MCF 10A (cell line): ENCODE measurements at regions of chr12 and their contacts with region 1.

Region 1: DNA sequence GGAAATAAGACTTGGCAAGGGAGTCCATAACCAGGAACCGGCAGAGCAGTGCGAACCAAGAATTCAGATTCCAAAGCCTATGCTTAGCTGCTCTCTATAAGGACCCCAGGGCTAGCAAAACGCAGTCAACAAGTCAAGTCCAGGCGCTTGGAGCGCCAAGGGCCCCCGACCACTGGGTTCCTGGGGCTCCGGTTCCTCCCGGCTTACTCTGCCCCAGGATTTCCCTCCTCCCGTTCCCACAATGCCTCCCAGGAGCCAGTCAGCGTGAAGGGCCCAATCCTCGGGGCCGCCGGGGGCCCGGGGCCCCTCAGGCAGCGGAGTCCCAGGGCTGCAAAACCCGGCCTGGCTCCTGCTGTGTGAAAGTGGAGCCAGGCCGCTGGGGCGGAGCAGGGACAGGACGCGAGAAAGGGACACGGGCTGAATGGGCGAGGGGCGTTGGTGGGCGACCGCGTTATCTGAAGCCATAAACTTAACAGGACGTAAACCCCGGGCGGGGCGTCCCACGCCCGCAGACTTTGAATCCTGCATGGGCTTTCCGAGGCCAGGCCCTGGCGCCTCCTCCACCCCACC is 1.5 kb downstream of the KRT8 start:
- DNase-seq: peak; percentile 87
- H3K4me3 Mint-ChIP-seq: peak overlapping the region; percentile 76
- H3K27ac Mint-ChIP-seq: peak overlapping the region; percentile 82
- H3K4me1 Mint-ChIP-seq: peaks cover 28% of the 10 kb centered on the region
- H3K27me3 Mint-ChIP-seq: no peaks in the 10 kb centered on the region
- CTCF ChIP-seq: no peak

Region 2: DNA sequence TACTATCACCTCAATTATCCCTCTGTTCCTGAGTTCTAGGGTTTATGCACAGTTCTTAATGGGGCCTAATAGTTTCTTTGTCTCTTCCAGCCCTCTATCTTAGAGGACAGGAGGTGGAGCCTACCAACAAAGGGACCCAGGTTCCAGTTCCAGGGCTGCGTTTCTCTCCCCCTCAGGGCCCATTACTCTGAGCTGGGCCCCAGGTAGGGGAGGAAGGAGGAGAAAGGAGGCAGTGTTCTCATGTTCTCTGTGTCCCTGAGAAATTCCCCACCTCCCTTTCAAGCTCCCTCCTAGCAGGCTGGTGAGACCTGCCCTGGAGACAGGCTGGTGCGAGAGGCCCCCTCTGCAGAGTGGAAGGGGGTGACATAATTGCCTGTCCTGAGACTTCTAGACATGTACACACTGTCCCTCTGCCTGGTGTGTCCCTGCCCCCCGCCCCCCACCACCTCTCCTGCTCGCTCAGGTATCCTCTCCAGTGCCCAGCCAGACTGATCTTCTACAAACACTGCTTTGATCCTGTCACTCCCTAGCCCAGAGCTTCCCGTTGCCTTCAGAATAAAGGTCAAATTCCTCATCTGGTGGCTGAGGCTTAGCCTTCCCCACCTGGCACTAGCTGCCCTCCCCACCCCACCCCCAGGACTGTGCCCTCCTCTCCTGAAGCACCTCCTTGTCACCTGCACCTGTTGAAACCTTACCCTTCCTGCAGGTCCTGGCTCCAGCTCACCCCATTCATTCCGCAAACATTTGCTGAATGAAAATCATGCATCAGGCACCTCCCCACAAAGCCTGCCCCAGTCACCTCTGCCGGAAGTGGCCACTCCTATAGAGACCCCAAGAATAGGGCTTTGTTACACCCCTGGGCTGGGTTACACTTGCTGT is 22.6 kb after region 1 on chr12:
- CTCF ChIA-PET with region 1: interaction called, 3 read pairs
- POLR2A ChIA-PET with region 1: interaction called, 8 read pairs
- intact Hi-C with region 1: loop called (anchors 2 kb)
- DNase-seq: no peak
- H3K4me3 Mint-ChIP-seq: no peak overlapping the region
- H3K27ac Mint-ChIP-seq: peak overlapping the region; percentile 94
- H3K4me1 Mint-ChIP-seq: peaks cover 26% of the 10 kb centered on the region
- H3K27me3 Mint-ChIP-seq: no peaks in the 10 kb centered on the region
- CTCF ChIP-seq: no peak

Region 3: DNA sequence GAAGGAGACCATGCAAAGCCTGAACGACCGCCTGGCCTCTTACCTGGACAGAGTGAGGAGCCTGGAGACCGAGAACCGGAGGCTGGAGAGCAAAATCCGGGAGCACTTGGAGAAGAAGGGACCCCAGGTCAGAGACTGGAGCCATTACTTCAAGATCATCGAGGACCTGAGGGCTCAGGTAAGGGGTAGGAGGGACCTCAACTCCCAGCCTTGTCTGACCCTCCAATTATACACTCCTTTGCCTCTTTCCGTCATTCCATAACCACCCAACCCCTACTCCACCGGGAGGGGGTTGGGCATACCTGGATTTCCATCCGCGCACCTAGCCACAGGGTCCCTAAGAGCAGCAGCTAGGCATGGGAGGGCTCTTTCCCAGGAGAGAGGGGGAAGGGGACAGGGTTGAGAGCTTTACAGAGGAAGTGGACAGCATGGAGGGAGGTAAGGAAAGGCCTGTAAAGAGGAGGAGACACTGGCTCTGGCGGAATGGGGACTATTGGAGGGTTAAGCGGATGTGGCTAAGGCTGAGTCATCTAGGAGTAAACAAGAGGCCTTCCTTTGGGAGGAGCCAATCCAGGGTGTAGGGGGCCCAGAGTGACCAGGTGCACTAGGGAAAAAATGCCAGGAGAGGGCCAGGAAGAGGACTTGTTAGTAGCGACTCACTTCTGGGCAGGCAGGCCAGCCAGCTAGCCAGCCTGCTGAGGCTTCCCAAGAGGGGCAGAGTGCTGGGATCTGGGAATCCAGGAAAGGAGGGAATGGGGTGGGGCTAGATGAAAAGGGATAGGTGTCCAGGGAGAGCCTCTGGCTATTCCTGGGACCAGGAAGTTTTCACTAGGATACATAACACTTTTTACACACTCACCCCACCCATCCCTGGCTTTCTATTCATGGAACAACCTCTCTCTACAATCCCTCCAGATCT is 46.3 kb after region 1 on chr12:
- CTCF ChIA-PET with region 1: interaction called, 16 read pairs
- POLR2A ChIA-PET with region 1: interaction called, 159 read pairs
- intact Hi-C with region 1: loop called (anchors 1 kb)
- DNase-seq: peak; percentile 98
- H3K4me3 Mint-ChIP-seq: peak overlapping the region; percentile 95
- H3K27ac Mint-ChIP-seq: peak overlapping the region; percentile 86
- H3K4me1 Mint-ChIP-seq: peaks cover 57% of the 10 kb centered on the region
- H3K27me3 Mint-ChIP-seq: no peaks in the 10 kb centered on the region
- CTCF ChIP-seq: no peak

Region 4: GRCh38 chr12:52969828-52970569 is 66.6 kb after region 1 on chr12:
- CTCF ChIA-PET with region 1: interaction called, 7 read pairs
- POLR2A ChIA-PET with region 1: interaction called, 95 read pairs
- intact Hi-C with region 1: no loop called
- DNase-seq: peak; percentile 60
- H3K4me3 Mint-ChIP-seq: no peak overlapping the region
- H3K27ac Mint-ChIP-seq: peak overlapping the region; percentile 39
- H3K4me1 Mint-ChIP-seq: peaks cover 23% of the 10 kb centered on the region
- H3K27me3 Mint-ChIP-seq: no peaks in the 10 kb centered on the region
- CTCF ChIP-seq: no peak

Region 5: DNA sequence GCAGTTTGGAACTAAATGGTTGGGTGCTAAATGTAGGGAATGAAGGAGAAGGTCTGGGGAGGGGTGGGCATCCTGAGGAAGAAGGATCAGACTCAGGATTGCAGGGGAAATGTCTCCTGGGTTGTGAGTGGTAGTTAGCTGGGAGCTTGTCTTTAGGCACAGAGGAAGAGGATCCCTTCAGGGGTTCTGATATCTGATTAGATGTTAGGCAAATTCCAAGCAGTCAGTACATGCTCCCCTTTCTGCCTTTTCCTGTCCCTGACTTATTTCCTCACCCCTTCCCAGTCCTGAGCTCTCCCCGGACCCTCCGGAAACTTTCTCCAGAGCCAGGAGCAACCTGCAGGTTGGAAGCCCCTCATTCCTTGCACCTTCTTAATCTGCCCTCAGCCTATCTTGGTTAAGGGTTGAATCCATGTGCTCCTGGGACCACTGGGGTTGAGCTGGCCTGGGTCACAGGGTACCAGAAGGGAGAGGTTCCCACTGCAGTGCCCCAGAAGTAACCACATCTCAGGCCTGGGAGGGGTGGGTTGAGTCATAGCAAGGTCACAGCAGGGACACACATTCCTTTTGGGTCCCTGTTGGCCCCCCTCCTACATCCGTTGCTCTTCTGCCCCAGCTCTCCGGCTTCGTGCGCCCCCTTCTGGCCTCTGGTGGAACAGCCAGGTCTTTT is 195.7 kb after region 1 on chr12:
- CTCF ChIA-PET with region 1: no interaction called
- POLR2A ChIA-PET with region 1: no interaction called
- intact Hi-C with region 1: no loop called
- DNase-seq: peak; percentile 92
- H3K4me3 Mint-ChIP-seq: peak overlapping the region; percentile 73
- H3K27ac Mint-ChIP-seq: peak overlapping the region; percentile 76
- H3K4me1 Mint-ChIP-seq: peaks cover 26% of the 10 kb centered on the region
- H3K27me3 Mint-ChIP-seq: no peaks in the 10 kb centered on the region
- CTCF ChIP-seq: peak; percentile 92